SK-N-SH (cell line): ENCODE measurements at regions of chr2 and their contacts with region 1.

Region 1: GRCh38 chr2:189412330-189412953 is 28.8 kb upstream of the WDR75 start:
- DNase-seq: peak; percentile 32
- H3K4me3 ChIP-seq: no peak overlapping the region
- H3K27ac ChIP-seq: peak overlapping the region; percentile 89 to 100
- H3K4me1 ChIP-seq: peaks cover 18 to 33% of the 10 kb centered on the region in 2 experiments; a peak in 3 of 4 replicates
- H3K27me3 ChIP-seq: no peaks in the 10 kb centered on the region
- CTCF ChIP-seq: peak; percentile 79
- EP300 ChIP-seq: no peak
- RAD21 ChIP-seq: peak; percentile 94

Region 2: DNA sequence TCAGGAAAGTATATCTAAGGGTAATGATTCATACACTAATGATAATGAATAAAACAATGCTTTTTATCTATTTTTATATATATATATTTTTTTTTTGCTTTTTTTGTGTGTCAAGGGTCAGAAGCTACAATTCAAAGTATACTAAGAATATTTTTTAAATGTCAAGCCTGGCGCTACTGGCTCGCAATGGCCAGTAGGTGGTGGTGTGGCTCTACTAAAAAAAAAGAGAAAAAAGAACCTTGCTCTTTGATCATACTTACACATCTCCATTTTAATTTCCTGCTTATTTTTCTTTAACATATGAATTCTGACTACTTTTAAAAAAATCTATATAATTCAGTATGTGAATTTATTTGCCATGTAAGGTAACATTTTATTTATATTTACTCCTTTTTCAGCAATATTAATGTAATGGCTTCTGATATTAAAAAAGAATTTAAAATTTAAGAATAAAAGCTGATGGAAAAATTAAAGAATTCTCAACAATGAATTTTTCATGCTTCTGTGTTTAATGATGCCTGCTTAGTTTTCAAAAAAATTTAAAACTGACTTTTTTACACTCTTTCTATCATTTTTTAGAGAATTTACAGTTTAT is 887.8 kb before region 1 on chr2:
- CTCF ChIA-PET with region 1: interaction called, 26 read pairs
- POLR2A ChIA-PET with region 1: no interaction called
- DNase-seq: peak; percentile 28
- H3K4me3 ChIP-seq: no peak overlapping the region
- H3K27ac ChIP-seq: peak overlapping the region; percentile 46 to 71
- H3K4me1 ChIP-seq: peaks cover 21 to 28% of the 10 kb centered on the region in 2 experiments; a peak in 2 of 4 replicates
- H3K27me3 ChIP-seq: no peaks in the 10 kb centered on the region
- CTCF ChIP-seq: peak; percentile 82
- EP300 ChIP-seq: no peak
- RAD21 ChIP-seq: peak; percentile 84

Region 3: GRCh38 chr2:189086710-189087109 is 325.7 kb before region 1 on chr2:
- CTCF ChIA-PET with region 1: interaction called, 10 read pairs
- POLR2A ChIA-PET with region 1: no interaction called
- DNase-seq: no peak
- H3K4me3 ChIP-seq: no peak overlapping the region
- H3K27ac ChIP-seq: peak overlapping the region; percentile 77 to 79
- H3K4me1 ChIP-seq: peaks cover 15 to 25% of the 10 kb centered on the region in 2 experiments; a peak in 3 of 4 replicates
- H3K27me3 ChIP-seq: no peaks in the 10 kb centered on the region
- CTCF ChIP-seq: no peak
- EP300 ChIP-seq: peak; percentile 28 to 92; a peak in 2 of 4 replicates
- RAD21 ChIP-seq: no peak

Region 4: DNA sequence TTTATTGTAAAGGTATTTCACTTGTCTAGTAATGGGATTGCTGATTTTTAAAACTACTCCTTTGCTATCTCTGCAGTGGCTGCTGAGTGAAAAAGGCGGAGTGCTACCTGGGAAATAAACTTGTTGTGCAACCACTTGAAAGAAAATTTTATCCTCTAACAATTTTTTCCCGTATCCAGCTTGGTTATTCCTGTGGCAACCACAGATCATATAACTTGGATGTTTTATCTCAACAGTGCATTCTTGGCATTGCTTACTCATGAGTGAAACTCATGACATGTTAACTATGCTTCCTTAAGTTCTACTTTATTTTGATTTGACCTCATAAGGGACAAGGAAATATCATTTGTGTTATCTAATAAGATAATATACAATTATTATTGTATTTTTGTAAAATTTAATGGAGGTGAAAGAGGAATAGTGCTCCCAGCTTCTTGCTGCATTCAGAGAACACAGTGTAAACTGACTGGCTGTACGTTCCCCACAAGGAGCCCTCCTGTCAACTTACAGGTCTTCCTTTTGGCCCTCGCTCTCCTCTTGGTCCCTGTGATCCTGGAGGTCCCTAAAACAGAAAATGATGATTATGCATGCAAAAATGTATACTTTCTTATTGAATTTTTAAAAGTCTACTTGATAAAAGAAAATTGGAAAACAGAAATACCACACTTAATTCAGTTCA is 315.5 kb before region 1 on chr2:
- CTCF ChIA-PET with region 1: interaction called, 24 read pairs
- POLR2A ChIA-PET with region 1: no interaction called
- DNase-seq: no peak
- H3K4me3 ChIP-seq: no peak overlapping the region
- H3K27ac ChIP-seq: peak overlapping the region; percentile 83 to 87
- H3K4me1 ChIP-seq: peaks cover 0 to 10% of the 10 kb centered on the region in 2 experiments
- H3K27me3 ChIP-seq: no peaks in the 10 kb centered on the region
- CTCF ChIP-seq: no peak
- EP300 ChIP-seq: peak; percentile 61 to 96
- RAD21 ChIP-seq: no peak

Region 5: GRCh38 chr2:189115126-189115525 is 297.3 kb before region 1 on chr2:
- CTCF ChIA-PET with region 1: interaction called, 13 read pairs
- POLR2A ChIA-PET with region 1: no interaction called
- DNase-seq: no peak
- H3K4me3 ChIP-seq: no peak overlapping the region
- H3K27ac ChIP-seq: peak overlapping the region; percentile 89 to 94
- H3K4me1 ChIP-seq: peaks cover 4 to 42% of the 10 kb centered on the region in 2 experiments; a peak in 3 of 4 replicates
- H3K27me3 ChIP-seq: no peaks in the 10 kb centered on the region
- CTCF ChIP-seq: peak; percentile 60
- EP300 ChIP-seq: no peak
- RAD21 ChIP-seq: peak; percentile 62

Region 6: DNA sequence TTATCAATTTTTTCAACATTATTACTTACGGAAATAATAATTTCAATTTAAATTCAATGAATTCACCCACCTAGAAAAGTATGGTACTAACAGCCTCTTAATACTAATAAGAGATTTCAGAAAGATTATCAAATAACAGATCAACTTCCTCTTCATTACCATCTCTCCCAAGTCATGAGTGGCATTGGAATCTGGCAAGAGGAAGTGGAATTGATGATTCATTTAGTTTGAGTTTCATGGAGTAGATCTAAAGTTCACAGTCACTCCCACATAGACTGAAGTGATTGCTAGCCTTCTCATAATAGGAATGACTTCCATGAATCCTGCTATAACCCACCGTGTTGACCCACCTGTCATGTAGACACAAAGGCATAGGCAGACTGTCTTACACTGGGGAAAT is 48.9 kb before region 1 on chr2:
- CTCF ChIA-PET with region 1: no interaction called
- POLR2A ChIA-PET with region 1: no interaction called
- DNase-seq: no peak
- H3K4me3 ChIP-seq: no peak overlapping the region
- H3K27ac ChIP-seq: peak overlapping the region in 1 of 2 experiments; percentile 79; a peak in 2 of 4 replicates
- H3K4me1 ChIP-seq: peaks cover 0 to 7% of the 10 kb centered on the region in 2 experiments; a peak in 3 of 4 replicates
- H3K27me3 ChIP-seq: no peaks in the 10 kb centered on the region
- CTCF ChIP-seq: no peak
- EP300 ChIP-seq: peak in 1 of 2 experiments; percentile 59; a peak in 2 of 4 replicates
- RAD21 ChIP-seq: no peak

Region 7: DNA sequence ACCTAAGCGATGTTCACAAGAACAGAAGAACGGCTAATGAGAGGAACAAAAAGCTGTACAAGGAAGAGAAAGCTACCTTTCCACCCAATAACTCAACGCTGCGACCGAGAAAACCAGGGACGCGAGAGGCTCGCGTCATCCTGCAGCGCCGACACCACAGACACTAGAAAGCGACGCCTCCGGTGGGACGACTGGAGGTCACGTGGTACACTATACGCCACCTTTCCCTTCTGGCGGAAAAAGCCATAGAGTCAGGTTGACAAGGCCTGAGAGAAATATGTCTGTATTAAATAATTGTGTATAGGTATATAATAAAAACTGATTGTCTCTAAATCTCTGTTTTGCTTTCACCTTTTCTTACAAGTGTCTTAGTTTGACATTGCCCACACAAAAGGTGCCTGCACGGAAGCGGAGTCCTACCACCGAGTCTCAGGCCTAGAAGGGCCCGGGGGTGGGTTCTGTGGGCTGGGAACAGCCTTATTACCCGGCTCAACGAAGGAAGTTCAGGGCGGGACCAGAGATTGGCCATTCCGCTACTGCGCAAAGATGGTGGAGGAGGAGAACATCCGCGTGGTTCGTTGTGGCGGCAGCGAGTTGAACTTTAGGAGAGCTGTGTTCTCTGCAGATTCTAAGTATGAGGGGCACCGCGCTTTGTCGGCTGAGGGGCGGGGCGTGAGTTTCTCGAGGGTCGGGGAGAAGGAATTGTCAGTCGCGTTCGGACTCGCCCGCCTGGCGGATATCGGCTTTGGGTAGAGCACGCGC is 28.7 kb after region 1 on chr2 and contains the start of gene WDR75:
- CTCF ChIA-PET with region 1: no interaction called
- POLR2A ChIA-PET with region 1: no interaction called
- DNase-seq: peak; percentile 87
- H3K4me3 ChIP-seq: peak within 1 kb of the TSS; percentile 78 to 87
- H3K27ac ChIP-seq: peak within 1 kb of the TSS; percentile 87 to 96
- H3K4me1 ChIP-seq: peaks cover 7 to 12% of the 10 kb centered on the region in 2 experiments; a peak in 3 of 4 replicates
- H3K27me3 ChIP-seq: no peaks in the 10 kb centered on the region
- CTCF ChIP-seq: no peak
- EP300 ChIP-seq: no peak
- RAD21 ChIP-seq: no peak
- polyA plus RNA-seq, gene WDR75: 25.6 and 37.4 TPM in 2 replicates